ENCODE measurements at regions of chr6 and their contacts with region 1.

Region 1: GRCh38 chr6:69835414-69836179 is 30.8 kb upstream of the COL19A1 start:
- DNase-seq: peak in 1 of 10 donors; percentile 17

Region 2: DNA sequence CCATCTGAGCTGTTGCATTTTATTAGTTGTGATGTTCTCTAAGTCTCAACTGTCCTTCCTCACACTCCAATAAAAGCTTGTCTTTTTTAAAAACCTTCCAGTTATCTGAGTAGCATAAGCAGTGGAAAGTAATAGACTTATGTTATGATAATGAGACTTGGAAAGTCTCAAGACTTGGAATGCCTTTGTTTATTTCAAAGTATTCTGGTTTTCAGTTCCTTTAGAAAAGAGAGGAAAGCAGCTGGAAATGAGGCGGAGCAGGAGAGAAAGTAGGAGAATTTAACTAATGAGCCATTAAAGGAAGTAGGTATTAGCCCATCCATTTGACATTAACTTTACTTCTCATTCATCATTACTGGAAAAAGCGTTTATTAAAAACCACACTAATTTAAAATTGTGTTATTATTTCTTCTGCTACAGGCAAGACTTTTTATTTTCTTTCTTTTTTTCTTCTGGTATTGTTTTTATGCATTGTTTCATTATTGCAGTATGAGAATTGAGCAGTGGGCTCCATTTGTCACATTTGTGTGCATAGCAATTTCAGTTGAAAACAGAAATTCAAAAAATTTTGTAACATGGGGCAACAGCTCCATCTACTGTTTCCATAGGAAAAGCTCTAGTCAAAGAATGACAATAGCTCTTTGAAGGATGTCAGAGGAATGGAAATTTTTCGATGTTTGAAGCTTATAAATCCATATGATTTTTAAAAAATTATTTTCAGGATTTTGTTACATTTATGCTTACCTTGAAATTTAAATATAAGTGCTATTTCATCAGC is 272.4 kb after region 1 on chr6:
- intact Hi-C with region 1: loop called (anchors 2 kb)
- DNase-seq: no peak

Region 3: DNA sequence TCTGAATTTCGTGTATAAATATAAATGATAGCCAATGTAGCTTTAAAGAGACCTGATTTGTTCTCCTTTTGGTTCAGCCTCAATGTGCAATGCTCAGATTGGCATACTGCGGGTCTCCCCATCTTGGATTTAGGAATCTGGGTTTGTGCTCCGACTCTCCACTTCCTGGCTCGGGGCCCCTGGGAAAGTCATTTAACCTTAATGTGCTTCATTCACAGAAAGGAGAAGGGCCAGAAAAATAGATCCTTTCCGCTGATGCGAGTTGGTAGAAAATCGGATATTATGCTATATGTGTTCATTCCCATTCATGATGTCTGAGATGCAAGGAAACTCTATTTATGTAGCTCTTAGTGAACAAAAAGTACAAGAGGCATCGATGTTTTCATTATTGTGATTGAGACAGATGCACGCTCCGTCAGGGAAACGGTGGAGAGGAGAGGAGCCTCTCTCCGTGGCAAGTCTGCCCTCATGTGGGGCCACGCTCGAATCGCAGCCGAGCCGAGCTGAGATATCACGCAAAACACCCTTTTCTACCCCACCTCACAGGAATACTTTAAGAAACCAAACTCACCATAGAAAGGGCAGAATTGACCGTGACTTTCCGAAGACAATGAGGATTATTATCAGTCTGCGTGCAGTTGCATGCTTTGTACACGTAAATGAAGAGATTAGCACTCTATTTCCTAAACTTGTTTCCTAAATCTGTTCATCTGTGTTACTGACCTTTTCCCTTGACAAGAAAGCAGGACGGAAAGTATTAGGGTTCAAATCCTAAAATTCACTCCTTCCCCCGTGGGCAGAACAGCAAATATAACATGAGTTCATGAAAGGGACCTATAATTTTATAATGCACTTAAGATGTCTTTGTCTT is 330.7 kb after region 1 on chr6:
- intact Hi-C with region 1: loop called (anchors 5 kb)
- DNase-seq: peak; percentile 52 to 97 (median 76)

Measured in posterior cingulate gyrus (tissue), 11 donors.